Right lobe of liver (tissue), 6 donors: ENCODE measurements at regions of chr6 and their contacts with region 1.

Region 1: DNA sequence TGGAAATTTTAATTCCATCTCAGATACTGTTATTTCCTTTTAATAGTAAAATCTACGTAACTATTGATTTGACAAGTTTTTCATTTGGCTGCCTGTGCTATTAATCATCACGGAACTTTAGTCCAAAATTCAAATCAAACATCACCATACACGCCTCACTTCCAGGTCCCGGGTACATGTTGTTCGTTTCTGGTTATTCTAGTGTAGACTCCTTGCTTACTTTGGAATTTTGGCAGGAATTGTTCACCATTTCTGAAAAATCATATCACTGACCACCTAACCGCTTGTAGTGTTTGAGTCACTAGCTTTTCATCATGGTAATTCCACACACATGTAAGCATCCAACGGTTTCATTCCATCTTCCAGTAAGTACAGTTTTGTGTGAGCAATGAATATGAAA is 98.0 kb upstream of the NHSL1 start:
- DNase-seq: no peak
- ATAC-seq: peak in 2 of 4 donors; percentile 25 to 30
- H3K4me3 ChIP-seq: no peak overlapping the region
- H3K27ac ChIP-seq: peak overlapping the region in 2 of 3 donors; percentile 24 to 58
- H3K4me1 ChIP-seq: peaks cover 0 to 60% (median 25%) of the 10 kb centered on the region in 4 donors
- H3K27me3 ChIP-seq: no peaks in the 10 kb centered on the region
- CTCF ChIP-seq: no peak
- POLR2A ChIP-seq: no peak

Region 2: GRCh38 chr6:138007014-138007472 is 590.3 kb before region 1 on chr6:
- intact Hi-C with region 1: no loop called
- DNase-seq: peak in 1 of 3 donors; percentile 35
- ATAC-seq: peak; percentile 60 to 73 (median 66)
- H3K4me3 ChIP-seq: no peak overlapping the region
- H3K27ac ChIP-seq: no peak overlapping the region
- H3K4me1 ChIP-seq: no peaks in the 10 kb centered on the region
- H3K27me3 ChIP-seq: no peaks in the 10 kb centered on the region
- CTCF ChIP-seq: peak; percentile 36 to 62 (median 58)
- POLR2A ChIP-seq: no peak

Region 3: GRCh38 chr6:138757136-138757535 is 159.8 kb after region 1 on chr6:
- intact Hi-C with region 1: loop called in 1 of 2 experiments (anchors 5 kb)
- DNase-seq: no peak
- ATAC-seq: no peak
- H3K4me3 ChIP-seq: no peak overlapping the region
- H3K27ac ChIP-seq: no peak overlapping the region
- H3K4me1 ChIP-seq: no peaks in the 10 kb centered on the region
- H3K27me3 ChIP-seq: no peaks in the 10 kb centered on the region
- CTCF ChIP-seq: no peak
- POLR2A ChIP-seq: no peak